ENCODE measurements at regions of chr4 and their contacts with region 1.

Region 1: GRCh38 chr4:687048-687970 is 1.6 kb downstream of the SLC49A3 start:
- DNase-seq: peak; percentile 93
- H3K4me3 Mint-ChIP-seq: peak overlapping the region; percentile 64
- H3K27ac Mint-ChIP-seq: peak overlapping the region; percentile 91
- H3K4me1 Mint-ChIP-seq: peaks cover 11% of the 10 kb centered on the region
- H3K27me3 Mint-ChIP-seq: no peaks in the 10 kb centered on the region
- CTCF ChIP-seq: no peak

Region 2: GRCh38 chr4:700587-701264 is 13.4 kb after region 1 on chr4:
- CTCF ChIA-PET with region 1: interaction called, 7 read pairs
- POLR2A ChIA-PET with region 1: interaction called, 12 read pairs
- intact Hi-C with region 1: no loop called
- DNase-seq: no peak
- H3K4me3 Mint-ChIP-seq: no peak overlapping the region
- H3K27ac Mint-ChIP-seq: no peak overlapping the region
- H3K4me1 Mint-ChIP-seq: peaks cover 5% of the 10 kb centered on the region
- H3K27me3 Mint-ChIP-seq: no peaks in the 10 kb centered on the region
- CTCF ChIP-seq: no peak

Region 3: DNA sequence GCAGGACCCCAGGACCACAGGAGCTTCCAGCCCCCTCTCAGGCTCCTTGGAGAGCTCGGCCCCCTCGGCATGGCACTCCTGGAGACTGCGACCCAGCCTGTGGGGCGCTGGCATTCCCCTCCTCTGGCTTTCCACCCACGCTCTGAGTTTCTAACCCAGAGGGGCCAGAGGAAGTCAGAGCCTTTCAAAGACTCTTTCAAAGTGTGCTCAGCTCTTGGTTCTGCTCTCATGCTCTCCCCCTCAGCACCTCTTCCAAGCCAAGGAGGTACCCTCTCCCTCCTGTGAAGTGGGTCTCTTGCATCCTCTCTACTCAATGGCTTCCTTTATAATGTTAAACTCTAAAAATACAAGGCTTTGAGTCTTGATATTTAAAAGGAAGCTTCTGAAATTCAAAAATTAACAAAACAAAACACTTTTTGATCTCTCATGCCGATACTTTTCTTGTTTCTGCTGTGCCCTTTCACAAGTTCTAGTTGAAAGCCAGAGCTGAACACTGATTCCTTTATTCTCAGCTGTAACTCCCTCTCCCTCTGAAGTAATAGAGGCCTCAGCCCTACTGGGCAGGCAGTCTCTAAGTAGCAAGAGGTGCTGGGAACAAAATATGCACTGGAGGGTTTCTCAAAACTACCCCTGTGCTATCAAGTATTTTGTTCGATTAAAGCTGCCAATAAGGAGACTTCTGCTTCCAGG is 1454.6 kb after region 1 on chr4:
- CTCF ChIA-PET with region 1: no interaction called
- POLR2A ChIA-PET with region 1: no interaction called
- intact Hi-C with region 1: no loop called
- DNase-seq: no peak
- H3K4me3 Mint-ChIP-seq: no peak overlapping the region
- H3K27ac Mint-ChIP-seq: peak overlapping the region; percentile 31
- H3K4me1 Mint-ChIP-seq: no peaks in the 10 kb centered on the region
- H3K27me3 Mint-ChIP-seq: no peaks in the 10 kb centered on the region
- CTCF ChIP-seq: no peak